Transverse colon (tissue), 4 donors: ENCODE measurements at regions of chr9 and their contacts with region 1.

Region 1: DNA sequence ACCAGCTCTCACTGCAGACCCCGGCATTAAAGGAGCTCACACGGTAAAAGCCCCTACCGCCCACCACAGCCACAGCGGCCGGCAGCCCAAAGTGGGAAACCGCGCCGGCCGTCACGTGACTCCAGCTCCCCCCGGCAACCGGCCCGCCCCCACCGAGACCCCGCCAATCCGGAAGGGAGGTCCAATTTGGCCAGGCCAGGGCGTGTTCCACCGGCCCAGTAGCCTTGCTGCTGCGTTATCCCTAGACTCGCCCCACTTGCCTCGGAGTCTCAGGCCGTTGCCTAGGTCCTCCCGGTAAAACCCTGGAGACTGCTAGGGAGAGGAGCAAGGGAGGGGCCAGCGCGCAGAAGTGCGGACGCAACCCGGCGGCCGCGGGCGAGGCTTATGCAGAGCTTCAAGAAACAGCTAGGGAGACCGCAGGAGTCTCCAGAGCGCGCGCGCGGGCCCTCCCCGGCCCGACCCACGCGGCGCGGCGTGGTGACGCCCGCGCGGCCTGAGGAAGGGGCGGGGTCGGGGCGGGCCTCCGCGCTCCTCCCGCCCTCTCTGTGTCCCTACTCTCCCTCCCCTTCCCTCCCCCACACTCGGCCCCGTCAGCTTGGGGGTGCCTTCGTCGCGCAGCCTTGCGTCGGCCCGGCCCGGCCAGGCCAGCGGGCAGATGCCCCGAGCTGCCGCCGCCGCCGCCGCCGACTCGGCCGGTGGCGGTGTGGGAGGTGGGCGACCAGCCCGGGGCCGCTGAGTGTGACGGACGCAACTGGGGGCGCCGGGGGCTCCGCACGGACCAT is at the start of gene RIC1:
- DNase-seq: peak; percentile 94
- H3K4me3 ChIP-seq: peak within 1 kb of the TSS; percentile 96 to 99 (median 98)
- H3K27ac ChIP-seq: peak within 1 kb of the TSS; percentile 97 to 100 (median 99)
- H3K4me1 ChIP-seq: peaks cover 22 to 53% (median 43%) of the 10 kb centered on the region in 4 donors
- H3K27me3 ChIP-seq: no peaks in the 10 kb centered on the region
- CTCF ChIP-seq: peak in 2 of 5 experiments; percentile 15 to 21
- EP300 ChIP-seq: no peak
- POLR2A ChIP-seq: peak; percentile 93
- total RNA-seq, gene RIC1: 22.5 to 93.9 (median 42.8) TPM

Region 2: GRCh38 chr9:5832543-5833529 is 204.1 kb after region 1 on chr9 and contains the start of gene ERMP1:
- in situ Hi-C with region 1: no loop called
- intact Hi-C with region 1: loop called (anchors 2 kb)
- DNase-seq: peak; percentile 92
- H3K4me3 ChIP-seq: peak within 1 kb of the TSS; percentile 67 to 98 (median 78)
- H3K27ac ChIP-seq: peak within 1 kb of the TSS; percentile 87 to 96 (median 90)
- H3K4me1 ChIP-seq: peaks cover 12 to 39% (median 28%) of the 10 kb centered on the region in 4 donors
- H3K27me3 ChIP-seq: no peaks in the 10 kb centered on the region
- CTCF ChIP-seq: peak; percentile 81 to 97 (median 89)
- EP300 ChIP-seq: no peak
- POLR2A ChIP-seq: peak; percentile 88
- total RNA-seq, gene ERMP1: 33.3 to 46.2 (median 34.8) TPM

Region 3: DNA sequence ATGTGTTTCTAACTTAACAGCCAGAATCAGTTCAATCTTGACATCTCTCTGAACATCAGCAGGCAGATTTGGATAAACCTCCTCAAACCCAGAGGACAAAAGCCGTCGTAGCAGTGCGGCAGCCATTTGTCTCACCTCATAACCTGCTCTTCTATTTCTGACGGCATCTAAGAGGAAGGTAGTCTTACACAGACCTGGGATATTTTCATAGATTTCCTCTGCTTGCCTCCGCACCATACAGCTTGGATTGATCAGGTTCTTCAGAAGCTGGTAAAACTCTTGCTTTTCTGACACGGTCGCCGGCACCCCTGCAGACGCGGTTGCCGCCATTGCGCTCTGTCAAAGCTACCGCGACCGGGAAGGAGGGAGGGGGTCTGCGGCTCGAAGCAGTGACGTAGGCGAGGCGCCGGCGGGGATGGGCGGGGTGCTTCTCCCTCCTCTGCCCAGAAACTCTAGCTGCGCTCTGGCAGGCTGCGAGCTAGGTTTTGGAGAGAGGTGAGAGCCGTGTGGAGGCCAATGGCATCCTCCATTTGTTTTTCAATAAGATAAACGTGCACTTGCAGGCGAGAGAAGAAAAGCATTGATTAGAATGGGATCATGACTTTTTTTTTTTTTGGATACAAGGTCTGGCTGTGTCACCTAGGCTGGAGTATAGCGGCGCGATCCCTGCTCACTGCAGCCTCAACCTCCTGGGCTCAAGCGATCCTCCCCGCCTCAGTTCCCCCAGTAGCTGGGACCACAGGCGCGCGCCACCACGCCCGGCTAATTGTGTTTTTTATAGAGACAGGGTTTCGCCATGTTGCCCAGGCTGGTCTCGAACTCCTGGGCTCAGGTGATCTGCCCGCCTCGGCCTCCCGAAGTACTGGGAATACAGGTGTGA is 386.8 kb after region 1 on chr9 and contains the start of gene RANBP6:
- in situ Hi-C with region 1: loop called in 1 of 4 experiments (anchors 10 kb)
- intact Hi-C with region 1: no loop called
- DNase-seq: peak; percentile 94
- H3K4me3 ChIP-seq: peak within 1 kb of the TSS; percentile 51 to 75 (median 66)
- H3K27ac ChIP-seq: peak within 1 kb of the TSS; percentile 81 to 91 (median 88)
- H3K4me1 ChIP-seq: peaks cover 7 to 35% (median 11%) of the 10 kb centered on the region in 4 donors
- H3K27me3 ChIP-seq: no peaks in the 10 kb centered on the region
- CTCF ChIP-seq: peak in 1 of 5 experiments; percentile 13
- EP300 ChIP-seq: no peak
- POLR2A ChIP-seq: peak; percentile 75
- total RNA-seq, gene RANBP6: 8.6 to 19.8 (median 8.9) TPM

Region 4: GRCh38 chr9:6681147-6681956 is 1052.6 kb after region 1 on chr9:
- in situ Hi-C with region 1: loop called in 1 of 4 experiments (anchors 10 kb)
- intact Hi-C with region 1: no loop called
- DNase-seq: peak; percentile 97
- H3K4me3 ChIP-seq: peak overlapping the region; percentile 44 to 74 (median 64)
- H3K27ac ChIP-seq: peak overlapping the region; percentile 93 to 97 (median 96)
- H3K4me1 ChIP-seq: peaks cover 0 to 14% (median 9%) of the 10 kb centered on the region in 4 donors
- H3K27me3 ChIP-seq: no peaks in the 10 kb centered on the region
- CTCF ChIP-seq: peak in 1 of 5 experiments; percentile 19
- EP300 ChIP-seq: no peak
- POLR2A ChIP-seq: peak; percentile 90

Region 5: DNA sequence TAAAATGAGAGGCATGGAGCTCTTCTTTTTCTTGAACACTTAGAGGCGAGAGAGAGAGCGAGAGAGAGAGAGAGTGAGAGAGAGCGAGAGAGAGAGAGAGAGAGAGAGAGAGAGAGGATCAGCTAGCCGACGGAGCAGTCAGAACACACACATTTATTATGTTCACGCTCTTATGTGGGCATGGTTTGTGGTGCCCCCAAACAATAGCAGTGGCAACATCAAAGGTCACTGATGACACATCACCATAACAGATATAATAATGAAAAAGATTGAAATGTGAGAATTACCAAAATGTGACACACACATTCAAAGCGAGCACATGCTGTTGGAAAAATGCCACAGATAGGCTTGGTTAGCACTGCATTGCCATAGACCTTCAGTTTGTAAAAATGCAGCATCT is 1245.1 kb after region 1 on chr9:
- in situ Hi-C with region 1: no loop called
- intact Hi-C with region 1: loop called (anchors 5 kb)
- DNase-seq: no peak
- H3K4me3 ChIP-seq: no peak overlapping the region
- H3K27ac ChIP-seq: no peak overlapping the region
- H3K4me1 ChIP-seq: no peaks in the 10 kb centered on the region
- H3K27me3 ChIP-seq: no peaks in the 10 kb centered on the region
- CTCF ChIP-seq: no peak
- EP300 ChIP-seq: no peak
- POLR2A ChIP-seq: no peak